ENCODE measurements at regions of chr6 and their contacts with region 1.

Region 1: DNA sequence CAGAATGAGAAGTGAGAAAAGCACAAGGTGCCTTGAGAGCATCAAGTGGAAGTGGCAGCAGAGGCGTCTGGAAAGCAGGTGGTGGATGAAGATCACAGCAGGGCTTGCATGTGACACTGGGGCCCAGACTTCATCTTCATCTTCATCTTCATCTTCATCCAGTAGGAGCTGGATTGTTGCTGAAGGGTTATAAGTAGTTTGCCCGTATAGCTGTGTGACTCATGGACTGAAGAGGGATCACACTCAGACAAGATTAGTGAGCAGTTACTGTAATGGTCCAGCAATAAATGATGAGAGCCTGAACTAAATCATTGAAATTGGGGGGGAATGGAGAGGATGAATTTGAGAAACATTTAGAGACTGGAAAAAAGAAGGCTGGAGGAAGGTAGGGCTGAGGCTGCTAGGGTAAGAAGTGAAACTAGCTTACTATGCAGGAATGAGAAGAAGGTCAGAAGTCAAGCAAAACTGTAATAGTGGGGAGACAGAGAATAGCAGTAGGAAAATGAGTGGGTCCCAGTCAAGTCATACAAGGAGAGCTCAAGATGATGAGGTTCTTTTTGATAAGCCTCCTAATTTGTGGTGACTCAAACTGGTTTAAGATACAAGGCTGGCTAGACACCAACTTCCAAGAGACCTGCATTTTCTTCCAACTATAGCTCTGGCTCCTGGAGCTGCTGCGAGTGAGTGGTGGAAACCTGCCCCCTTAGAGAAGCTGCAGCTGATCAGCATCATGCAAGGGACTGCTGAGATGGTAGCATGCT is 92.3 kb upstream of the BEND6 start:
- DNase-seq: no peak
- CTCF ChIP-seq: no peak

Region 2: DNA sequence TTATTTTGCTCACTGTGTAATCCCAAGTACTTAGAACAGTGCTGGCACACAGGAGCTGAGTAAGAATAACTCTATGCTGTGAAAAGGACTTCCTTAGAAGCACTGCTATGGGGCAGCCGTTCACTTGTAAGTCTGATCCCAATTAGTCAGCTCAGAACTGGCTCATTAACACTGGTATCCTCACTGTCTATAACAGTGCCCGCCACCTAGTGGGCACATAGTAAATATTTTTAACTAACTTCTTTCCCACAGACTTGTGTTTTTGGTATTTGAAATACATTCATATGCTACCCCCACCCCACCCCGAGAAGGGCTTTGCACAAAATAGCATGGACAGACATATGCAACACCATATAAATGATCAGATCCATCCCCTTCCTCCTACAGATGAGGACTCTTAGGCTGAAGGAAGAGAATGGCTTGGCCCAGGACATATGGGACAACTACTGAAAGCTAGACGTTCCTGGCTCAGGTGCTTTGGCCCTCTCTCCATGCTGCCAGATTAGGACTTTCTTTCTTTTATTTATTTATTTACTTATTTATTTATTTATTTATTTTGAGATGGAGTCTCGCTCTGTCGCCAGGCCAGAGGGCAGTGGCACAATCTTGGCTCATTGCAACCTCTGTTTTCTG is 267.0 kb before region 1 on chr6:
- in situ Hi-C with region 1: no loop called
- DNase-seq: peak; percentile 15
- CTCF ChIP-seq: peak; percentile 67

Region 3: DNA sequence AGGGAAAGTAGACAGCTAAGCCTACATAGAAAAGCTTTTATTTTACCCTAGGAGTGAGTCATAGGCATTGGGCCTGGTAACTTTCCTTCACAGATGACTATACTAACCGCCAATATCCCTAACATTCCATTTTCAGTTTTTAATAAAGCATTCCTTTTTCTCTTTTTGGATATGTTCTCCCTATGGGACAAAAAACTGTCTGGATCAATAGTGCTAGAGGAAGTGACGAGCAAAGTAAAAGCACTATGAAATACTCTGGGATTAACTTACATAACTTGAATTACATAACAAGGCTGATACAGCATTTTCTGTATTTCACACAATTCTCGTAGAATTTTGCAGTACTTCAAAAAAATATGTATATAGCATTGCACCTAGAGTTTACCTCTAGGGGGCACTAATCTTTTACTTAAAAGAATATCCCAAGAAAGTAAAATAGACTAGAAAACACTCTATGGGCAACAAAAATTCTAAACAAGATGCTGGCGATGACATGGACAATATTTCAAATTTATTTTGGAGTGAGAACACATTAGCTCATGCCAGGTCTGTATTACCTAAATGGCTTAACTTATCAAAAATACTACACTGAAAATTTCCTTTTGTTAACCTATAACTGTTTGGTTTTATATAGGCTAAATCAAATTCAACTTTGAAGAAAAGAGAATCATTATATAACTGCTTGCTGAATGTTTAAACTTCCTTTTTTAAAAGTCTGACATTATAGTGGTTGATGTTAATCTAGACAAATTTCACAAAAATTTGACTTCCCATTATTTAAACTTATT is 153.6 kb before region 1 on chr6:
- in situ Hi-C with region 1: loop called (anchors 10 kb)
- DNase-seq: peak; percentile 44
- CTCF ChIP-seq: peak; percentile 51

Measured in GM13977 (cell line).